Activated CD4-positive, alpha-beta memory T cell treated with anti-CD3 and anti-CD28 coated beads, Interleukin-2, amount 10 ng/mL, durations not matched to agents 7 days and 5 days (primary cell): ENCODE measurements at regions of chr7 and their contacts with region 1.

Region 1: DNA sequence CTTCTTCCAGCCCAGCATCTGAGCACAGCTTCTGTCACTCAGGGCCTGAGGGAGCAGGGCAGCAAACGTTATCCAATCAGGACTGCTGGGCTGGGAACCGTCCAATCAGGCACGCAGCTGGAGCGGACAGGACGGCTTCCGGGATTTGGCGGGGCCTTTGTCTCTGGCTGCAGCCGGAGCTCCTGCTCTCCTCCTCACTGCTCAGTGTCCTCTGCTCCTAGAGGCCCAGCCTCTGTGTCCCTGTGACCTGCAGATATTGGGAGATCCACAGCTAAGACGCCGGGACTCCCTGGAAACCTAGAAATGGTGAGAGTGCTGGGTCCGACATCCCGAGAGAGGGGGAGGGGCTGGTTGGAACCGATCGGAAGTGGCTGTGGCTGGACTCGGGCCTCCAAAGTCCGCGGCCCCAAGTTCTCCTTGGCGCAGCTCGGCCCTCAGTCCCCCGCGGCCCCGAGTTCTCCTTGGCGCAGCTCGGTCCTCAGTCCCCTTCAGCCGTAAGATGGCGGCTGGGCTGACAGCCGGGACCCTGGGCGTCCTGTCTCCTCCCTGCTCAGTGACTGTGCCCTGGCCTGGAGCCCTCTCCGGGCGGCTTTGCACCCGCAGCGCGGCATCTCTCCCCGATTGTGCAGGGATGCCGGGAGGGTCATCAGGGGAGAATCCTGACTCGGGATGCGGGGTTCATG is at the start of gene ZNF107:
- DNase-seq: peak; percentile 91
- H3K4me3 Mint-ChIP-seq: peak within 1 kb of the TSS; percentile 95
- H3K27ac Mint-ChIP-seq: peak within 1 kb of the TSS; percentile 96
- H3K4me1 Mint-ChIP-seq: peaks cover 33% of the 10 kb centered on the region
- H3K27me3 Mint-ChIP-seq: no peaks in the 10 kb centered on the region
- total RNA-seq, gene ZNF107: 19.5 to 20.0 TPM

Region 2: GRCh38 chr7:64313740-64314491 is 352.2 kb before region 1 on chr7 and contains the start of gene ZNF736:
- CTCF ChIA-PET with region 1: no interaction called
- POLR2A ChIA-PET with region 1: interaction called, 34 read pairs
- DNase-seq: peak; percentile 91
- H3K4me3 Mint-ChIP-seq: peak within 1 kb of the TSS; percentile 97
- H3K27ac Mint-ChIP-seq: peak within 1 kb of the TSS; percentile 92
- H3K4me1 Mint-ChIP-seq: peaks cover 30% of the 10 kb centered on the region
- H3K27me3 Mint-ChIP-seq: no peaks in the 10 kb centered on the region
- total RNA-seq, gene ZNF736: 22.5 to 24.5 TPM

Region 3: DNA sequence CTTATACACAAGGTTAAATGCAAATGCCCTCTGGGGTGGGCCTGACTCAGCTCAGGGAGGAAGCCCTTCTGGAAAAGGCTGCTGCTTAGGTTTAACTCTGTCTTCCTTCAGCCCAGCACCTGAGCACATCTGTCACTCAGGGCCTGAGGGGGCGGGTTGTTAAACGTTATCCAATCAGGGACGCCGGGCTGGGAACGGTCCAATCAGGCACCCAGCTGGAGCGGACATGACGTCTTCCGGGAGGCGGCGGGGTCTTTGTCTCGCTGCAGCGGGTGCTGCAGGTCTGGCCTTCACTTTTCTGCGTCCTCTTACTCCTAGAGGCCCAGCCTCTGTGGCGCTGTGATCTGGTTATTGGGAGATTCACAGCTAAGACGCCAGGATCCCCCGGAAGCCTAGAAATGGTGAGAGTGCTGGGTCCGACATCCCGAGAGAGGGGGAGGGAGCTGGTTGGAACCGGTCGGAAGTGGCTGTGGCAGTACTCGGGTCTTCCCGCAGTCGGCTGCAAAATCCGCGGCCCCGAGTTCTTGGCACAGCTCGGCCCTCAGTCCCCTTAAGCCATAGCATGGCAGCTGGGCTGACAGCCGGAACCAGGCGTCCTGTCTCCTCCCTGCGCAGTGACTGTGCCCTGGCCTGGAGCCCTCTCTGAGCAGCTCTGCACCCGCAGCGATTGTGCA is 128.2 kb after region 1 on chr7 and contains the start of gene ZNF138:
- CTCF ChIA-PET with region 1: interaction called, 8 read pairs
- POLR2A ChIA-PET with region 1: interaction called, 48 read pairs
- DNase-seq: peak; percentile 95
- H3K4me3 Mint-ChIP-seq: peak within 1 kb of the TSS; percentile 97
- H3K27ac Mint-ChIP-seq: peak within 1 kb of the TSS; percentile 97
- H3K4me1 Mint-ChIP-seq: peaks cover 24% of the 10 kb centered on the region
- H3K27me3 Mint-ChIP-seq: no peaks in the 10 kb centered on the region
- total RNA-seq, gene ZNF138: 8.3 to 9.0 TPM

Region 4: GRCh38 chr7:65006094-65006992 is 340.2 kb after region 1 on chr7 and contains the start of gene ERV3-1:
- CTCF ChIA-PET with region 1: interaction called, 3 read pairs
- POLR2A ChIA-PET with region 1: interaction called, 18 read pairs
- DNase-seq: peak; percentile 94
- H3K4me3 Mint-ChIP-seq: peak within 1 kb of the TSS; percentile 91
- H3K27ac Mint-ChIP-seq: peak within 1 kb of the TSS; percentile 72
- H3K4me1 Mint-ChIP-seq: peaks cover 29% of the 10 kb centered on the region
- H3K27me3 Mint-ChIP-seq: no peaks in the 10 kb centered on the region
- total RNA-seq, gene ERV3-1: 9.6 to 14.4 TPM